Activated CD4-positive, alpha-beta memory T cell treated with anti-CD3 and anti-CD28 coated beads for 36 hours (primary cell): ENCODE measurements at regions of chr9 and their contacts with region 1.

Region 1: GRCh38 chr9:214648-215493 is at the start of gene DOCK8:
- DNase-seq: peak; percentile 71
- H3K4me3 Mint-ChIP-seq: peak within 1 kb of the TSS; percentile 80
- H3K27ac Mint-ChIP-seq: peak within 1 kb of the TSS; percentile 66
- H3K4me1 Mint-ChIP-seq: peaks cover 15% of the 10 kb centered on the region
- H3K27me3 Mint-ChIP-seq: no peaks in the 10 kb centered on the region
- total RNA-seq, gene DOCK8: 140 to 141 TPM

Region 2: DNA sequence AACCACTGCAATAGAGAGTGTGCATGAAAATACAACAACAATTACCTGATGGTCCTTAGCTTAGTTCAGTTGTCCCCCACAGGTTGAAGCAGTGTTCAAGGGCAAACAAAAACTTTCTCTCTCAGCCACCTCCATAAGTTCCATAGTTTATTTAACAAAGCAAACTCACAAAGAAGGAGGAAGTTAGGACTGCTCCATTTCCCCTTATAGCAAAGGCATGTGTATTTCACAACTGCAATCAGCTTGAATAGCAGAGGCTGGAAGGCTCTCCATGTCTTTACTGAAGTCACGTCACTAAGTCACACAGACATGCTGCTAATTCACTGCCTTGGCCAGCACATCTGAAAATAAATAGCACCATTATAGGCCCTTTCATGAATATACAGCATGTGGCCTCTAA is 43.1 kb after region 1 on chr9:
- CTCF ChIA-PET with region 1: no interaction called
- POLR2A ChIA-PET with region 1: no interaction called
- intact Hi-C with region 1: loop called (anchors 1 kb)
- DNase-seq: no peak
- H3K4me3 Mint-ChIP-seq: no peak overlapping the region
- H3K27ac Mint-ChIP-seq: no peak overlapping the region
- H3K4me1 Mint-ChIP-seq: no peaks in the 10 kb centered on the region
- H3K27me3 Mint-ChIP-seq: no peaks in the 10 kb centered on the region

Region 3: GRCh38 chr9:278651-279050 is 63.8 kb after region 1 on chr9:
- CTCF ChIA-PET with region 1: interaction called, 19 read pairs
- POLR2A ChIA-PET with region 1: interaction called, 34 read pairs
- intact Hi-C with region 1: loop called (anchors 1 kb)
- DNase-seq: peak; percentile 82
- H3K4me3 Mint-ChIP-seq: no peak overlapping the region
- H3K27ac Mint-ChIP-seq: no peak overlapping the region
- H3K4me1 Mint-ChIP-seq: peaks cover 40% of the 10 kb centered on the region
- H3K27me3 Mint-ChIP-seq: no peaks in the 10 kb centered on the region

Region 4: GRCh38 chr9:306887-307286 is 92.0 kb after region 1 on chr9:
- CTCF ChIA-PET with region 1: interaction called, 5 read pairs
- POLR2A ChIA-PET with region 1: interaction called, 5 read pairs
- intact Hi-C with region 1: loop called (anchors 1 kb)
- DNase-seq: peak; percentile 69
- H3K4me3 Mint-ChIP-seq: no peak overlapping the region
- H3K27ac Mint-ChIP-seq: peak overlapping the region; percentile 44
- H3K4me1 Mint-ChIP-seq: peaks cover 19% of the 10 kb centered on the region
- H3K27me3 Mint-ChIP-seq: no peaks in the 10 kb centered on the region